HEK293 (cell line): ENCODE measurements at regions of chr2 and their contacts with region 1.

Region 1: DNA sequence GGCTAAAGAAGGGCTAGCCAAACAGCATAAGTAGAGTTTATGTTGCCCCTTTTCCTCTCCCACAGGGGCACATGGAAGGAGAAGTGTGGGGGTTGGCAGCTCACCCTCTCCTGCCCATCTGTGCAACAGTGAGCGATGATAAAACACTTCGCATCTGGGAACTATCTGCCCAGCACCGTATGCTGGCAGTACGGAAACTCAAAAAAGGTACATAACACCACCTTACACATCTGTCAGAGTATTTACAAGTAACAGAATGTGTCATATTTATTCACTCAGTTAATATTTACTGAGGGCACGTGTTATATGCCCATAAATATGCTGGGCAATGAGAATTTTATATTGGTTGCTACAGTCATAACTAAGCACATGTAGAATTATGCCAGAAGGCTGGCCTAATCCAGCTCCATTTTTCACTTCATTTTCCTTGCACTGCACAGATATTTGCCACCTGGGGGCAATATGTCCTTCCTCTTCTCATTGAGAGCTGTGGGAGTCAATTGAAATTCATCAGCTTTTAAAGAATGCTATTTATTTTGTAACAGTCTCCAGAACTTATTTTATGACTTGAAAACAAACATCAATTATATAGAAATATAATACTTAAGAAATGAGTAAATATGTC is 150.6 kb downstream of the RTN4 start:
- H3K4me3 ChIP-seq: no peak overlapping the region
- H3K27ac ChIP-seq: no peak overlapping the region
- H3K4me1 ChIP-seq: no peaks in the 10 kb centered on the region
- CTCF ChIP-seq: no peak

Region 2: GRCh38 chr2:54697934-54698333 is 201.8 kb before region 1 on chr2:
- CTCF ChIA-PET with region 1: no interaction called
- POLR2A ChIA-PET with region 1: no interaction called
- H3K4me3 ChIP-seq: no peak overlapping the region
- H3K27ac ChIP-seq: no peak overlapping the region
- H3K4me1 ChIP-seq: no peaks in the 10 kb centered on the region
- CTCF ChIP-seq: no peak

Region 3: GRCh38 chr2:55014962-55015939 is 115.6 kb after region 1 on chr2:
- CTCF ChIA-PET with region 1: interaction called, 41 read pairs
- POLR2A ChIA-PET with region 1: no interaction called
- H3K4me3 ChIP-seq: no peak overlapping the region
- H3K27ac ChIP-seq: no peak overlapping the region
- H3K4me1 ChIP-seq: peaks cover 24% of the 10 kb centered on the region
- CTCF ChIP-seq: peak; percentile 33; the same call in 1 of the 2 replicates

Region 4: DNA sequence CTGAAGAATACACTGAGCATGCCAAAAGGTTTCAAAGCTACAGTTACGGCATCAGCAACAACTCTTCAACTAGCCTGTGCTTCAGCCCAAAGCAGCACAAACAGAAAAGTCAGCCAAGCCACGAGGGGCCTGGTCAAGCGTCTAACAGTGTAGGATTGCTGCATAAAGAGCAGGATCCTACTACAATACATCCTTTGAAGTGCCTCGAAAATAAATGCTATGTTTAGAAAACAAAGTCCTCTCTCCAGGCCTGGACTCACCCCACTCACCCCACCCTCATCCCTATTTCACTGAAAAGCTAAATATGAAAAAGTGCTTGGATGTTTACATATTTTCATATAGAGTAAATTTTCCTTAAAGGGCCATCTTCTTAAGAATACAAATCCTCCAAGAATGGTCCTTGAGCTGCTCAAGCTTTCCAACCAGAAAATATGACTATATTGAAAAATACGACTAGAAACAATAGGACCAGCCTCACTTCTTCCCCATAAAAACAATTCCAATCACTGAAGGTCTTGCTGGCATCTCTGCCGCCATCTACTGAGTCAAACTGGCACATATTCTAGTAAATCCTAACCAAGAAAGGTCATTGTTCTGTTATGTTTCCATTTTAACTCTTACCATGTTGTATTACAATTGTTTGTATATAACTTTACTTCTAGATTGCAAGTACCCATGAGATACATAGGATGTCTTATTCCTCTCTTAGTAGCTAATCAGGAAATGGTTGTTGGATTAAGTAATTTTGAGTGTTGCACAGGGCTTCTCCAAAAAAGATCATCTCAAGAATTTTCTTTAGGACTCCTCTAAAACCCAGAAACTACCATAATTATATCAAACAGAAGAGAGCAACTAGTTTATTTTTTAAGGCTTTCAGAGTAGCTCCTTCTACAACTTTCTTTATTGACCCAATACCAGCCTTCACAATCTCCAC is 268.8 kb after region 1 on chr2:
- CTCF ChIA-PET with region 1: interaction called, 63 read pairs
- POLR2A ChIA-PET with region 1: no interaction called
- H3K4me3 ChIP-seq: no peak overlapping the region
- H3K27ac ChIP-seq: no peak overlapping the region
- H3K4me1 ChIP-seq: no peaks in the 10 kb centered on the region
- CTCF ChIP-seq: 0 out of 2 replicates have a peak, but pooled peaks have one; percentile 18

Region 5: DNA sequence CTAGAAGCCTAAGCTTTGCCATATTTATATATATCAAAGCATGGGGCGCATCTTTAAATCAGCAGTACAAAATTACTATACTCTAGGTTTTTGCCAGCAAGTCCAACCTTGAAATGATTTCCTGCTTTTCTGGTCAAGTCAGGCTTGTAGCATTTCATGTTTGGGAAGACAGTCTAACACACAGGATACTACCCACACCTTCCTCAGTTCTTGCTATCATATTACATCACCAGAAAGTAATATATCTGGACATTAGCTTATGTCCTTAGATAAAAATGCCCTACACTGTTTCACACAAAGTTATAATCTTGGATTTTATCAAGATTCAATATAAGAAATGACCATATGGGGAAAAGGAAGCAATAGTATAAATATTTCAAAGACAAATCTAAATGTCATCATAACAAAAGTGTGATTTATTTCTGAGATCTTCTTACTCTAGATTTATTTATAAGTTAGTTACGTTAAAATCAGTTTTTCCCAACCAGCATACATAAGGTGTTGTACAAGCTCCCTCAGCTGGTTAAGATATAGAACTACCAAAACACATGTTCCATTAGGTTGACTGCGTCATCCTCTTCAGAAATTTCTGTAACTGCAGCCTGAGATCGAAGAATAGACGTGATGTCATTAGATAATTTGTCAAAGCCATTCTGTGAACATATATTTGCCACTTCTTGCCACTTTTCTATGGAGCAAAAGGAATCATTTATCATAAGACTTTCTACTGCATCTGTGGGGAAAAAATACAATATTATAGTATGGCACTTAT is 275.8 kb after region 1 on chr2:
- CTCF ChIA-PET with region 1: interaction called, 63 read pairs
- POLR2A ChIA-PET with region 1: no interaction called
- H3K4me3 ChIP-seq: no peak overlapping the region
- H3K27ac ChIP-seq: no peak overlapping the region
- H3K4me1 ChIP-seq: no peaks in the 10 kb centered on the region
- CTCF ChIP-seq: no peak